CD8-positive, alpha-beta T cell (primary cell): ENCODE measurements at regions of chr10 and their contacts with region 1.

Region 1: GRCh38 chr10:30701451-30702173 is 72.1 kb upstream of the LYZL2 start:
- DNase-seq: peak; percentile 41 to 92 (median 74)
- ATAC-seq: peak; percentile 70
- H3K4me3 ChIP-seq: peak overlapping the region; percentile 1 to 43
- H3K4me3 Mint-ChIP-seq: peak overlapping the region; percentile 78
- H3K27ac ChIP-seq: peak overlapping the region; percentile 48 to 81
- H3K27ac Mint-ChIP-seq: peak overlapping the region; percentile 95
- H3K4me1 ChIP-seq: peaks cover 74% of the 10 kb centered on the region
- H3K4me1 Mint-ChIP-seq: peaks cover 83% of the 10 kb centered on the region
- H3K27me3 ChIP-seq: no peaks in the 10 kb centered on the region
- H3K27me3 Mint-ChIP-seq: no peaks in the 10 kb centered on the region
- CTCF ChIP-seq: no peak

Region 2: DNA sequence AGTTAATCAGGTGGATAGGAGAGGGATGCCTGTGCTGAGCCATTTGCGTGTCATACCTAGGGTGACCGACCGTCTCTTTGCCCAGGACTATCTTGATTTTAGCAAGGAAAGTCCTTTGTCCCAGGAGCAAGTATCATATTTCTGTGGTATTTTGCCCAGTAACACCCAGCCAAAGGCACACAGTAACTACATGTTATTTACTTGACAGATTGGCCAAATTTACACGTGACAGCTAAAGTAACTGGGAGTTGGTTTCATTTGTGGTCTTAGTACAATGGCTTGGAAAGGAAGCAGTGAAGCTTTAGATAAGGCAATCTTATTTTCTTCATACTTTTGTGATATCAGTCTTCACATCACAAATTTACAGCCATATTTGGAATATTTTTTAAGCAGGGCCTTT is 784.3 kb before region 1 on chr10:
- CTCF ChIA-PET with region 1: no interaction called
- POLR2A ChIA-PET with region 1: no interaction called
- intact Hi-C with region 1: no loop called
- DNase-seq: no peak
- ATAC-seq: no peak
- H3K4me3 ChIP-seq: no peak overlapping the region
- H3K4me3 Mint-ChIP-seq: no peak overlapping the region
- H3K27ac ChIP-seq: no peak overlapping the region
- H3K27ac Mint-ChIP-seq: no peak overlapping the region
- H3K4me1 ChIP-seq: no peaks in the 10 kb centered on the region
- H3K4me1 Mint-ChIP-seq: no peaks in the 10 kb centered on the region
- H3K27me3 ChIP-seq: peaks cover 0 to 6% of the 10 kb centered on the region in 2 experiments
- H3K27me3 Mint-ChIP-seq: peaks cover 17% of the 10 kb centered on the region
- CTCF ChIP-seq: no peak

Region 3: DNA sequence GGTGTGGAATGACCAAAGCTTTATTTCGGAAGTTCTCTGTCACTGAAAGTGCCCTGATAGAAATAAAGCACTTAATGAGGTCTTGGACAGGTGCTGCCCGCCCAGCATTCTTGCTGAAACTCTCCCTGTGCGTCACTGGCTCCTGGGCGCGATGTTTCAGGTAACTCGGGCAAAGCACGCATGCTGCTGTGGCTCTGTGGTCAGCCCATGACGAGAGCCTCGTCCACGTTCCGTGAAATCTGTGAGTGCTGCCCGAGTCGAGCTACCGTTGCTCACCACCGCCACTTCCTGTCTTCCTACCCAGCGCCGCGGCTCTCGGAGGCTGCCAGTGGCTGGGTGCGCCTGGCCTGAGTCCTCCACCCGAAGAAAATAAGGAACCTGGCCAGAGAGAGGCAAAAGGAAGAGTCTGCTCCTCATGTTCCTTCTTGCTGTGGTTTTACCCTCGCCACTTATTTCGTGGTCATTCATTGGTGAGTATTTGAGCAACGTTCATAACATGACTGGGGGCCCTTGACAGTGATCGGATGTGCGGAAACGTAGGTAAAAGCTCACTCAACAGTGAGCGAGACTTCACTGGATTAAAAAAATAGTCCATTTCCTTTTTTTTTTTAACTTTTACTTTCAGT is 172.1 kb before region 1 on chr10:
- CTCF ChIA-PET with region 1: no interaction called
- POLR2A ChIA-PET with region 1: interaction called, 4 read pairs
- intact Hi-C with region 1: loop called (anchors 5 to 10 kb)
- DNase-seq: peak; percentile 64 to 94 (median 77)
- ATAC-seq: peak; percentile 79
- H3K4me3 ChIP-seq: peak overlapping the region; percentile 47 to 63
- H3K4me3 Mint-ChIP-seq: peak overlapping the region; percentile 86
- H3K27ac ChIP-seq: peak overlapping the region; percentile 89 to 94
- H3K27ac Mint-ChIP-seq: peak overlapping the region; percentile 99
- H3K4me1 ChIP-seq: peaks cover 47% of the 10 kb centered on the region
- H3K4me1 Mint-ChIP-seq: peaks cover 66% of the 10 kb centered on the region
- H3K27me3 ChIP-seq: no peaks in the 10 kb centered on the region
- H3K27me3 Mint-ChIP-seq: no peaks in the 10 kb centered on the region
- CTCF ChIP-seq: no peak

Region 4: GRCh38 chr10:30751678-30752331 is 50.2 kb after region 1 on chr10:
- CTCF ChIA-PET with region 1: no interaction called
- POLR2A ChIA-PET with region 1: no interaction called
- intact Hi-C with region 1: no loop called
- DNase-seq: peak in 5 of 9 experiments; percentile 40 to 65 (median 58)
- ATAC-seq: no peak
- H3K4me3 ChIP-seq: no peak overlapping the region
- H3K4me3 Mint-ChIP-seq: no peak overlapping the region
- H3K27ac ChIP-seq: no peak overlapping the region
- H3K27ac Mint-ChIP-seq: no peak overlapping the region
- H3K4me1 ChIP-seq: peaks cover 3% of the 10 kb centered on the region
- H3K4me1 Mint-ChIP-seq: peaks cover 29% of the 10 kb centered on the region
- H3K27me3 ChIP-seq: no peaks in the 10 kb centered on the region
- H3K27me3 Mint-ChIP-seq: peaks cover 3% of the 10 kb centered on the region
- CTCF ChIP-seq: no peak

Region 5: DNA sequence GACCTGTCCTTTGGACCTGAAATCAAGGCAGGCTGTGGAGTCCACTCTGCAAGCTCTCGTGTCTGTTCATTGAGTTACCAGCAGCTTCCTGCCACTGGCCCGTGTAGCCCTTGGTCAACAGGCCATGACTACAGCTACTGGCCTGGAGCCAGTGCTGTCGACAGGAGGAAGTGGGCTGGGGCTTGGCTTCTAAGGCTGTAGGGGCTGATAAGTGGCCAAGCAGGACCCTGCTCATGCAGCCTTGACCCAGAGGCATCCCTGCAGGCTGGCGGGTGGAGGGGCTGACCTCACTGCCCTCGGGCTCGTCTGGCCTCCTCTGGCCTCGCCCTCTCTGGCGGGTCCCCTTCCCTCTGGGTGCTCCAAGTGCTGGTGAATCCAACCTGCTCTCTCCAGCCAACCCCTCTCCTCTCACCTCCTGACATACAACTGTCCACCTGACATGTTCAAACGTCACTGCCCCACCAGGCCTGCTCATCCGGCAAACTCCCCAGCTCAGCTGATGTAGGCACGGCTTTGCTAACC is 116.5 kb after region 1 on chr10:
- CTCF ChIA-PET with region 1: no interaction called
- POLR2A ChIA-PET with region 1: no interaction called
- intact Hi-C with region 1: no loop called
- DNase-seq: no peak
- ATAC-seq: no peak
- H3K4me3 ChIP-seq: no peak overlapping the region
- H3K4me3 Mint-ChIP-seq: no peak overlapping the region
- H3K27ac ChIP-seq: no peak overlapping the region
- H3K27ac Mint-ChIP-seq: no peak overlapping the region
- H3K4me1 ChIP-seq: no peaks in the 10 kb centered on the region
- H3K4me1 Mint-ChIP-seq: peaks cover 12% of the 10 kb centered on the region
- H3K27me3 ChIP-seq: no peaks in the 10 kb centered on the region
- H3K27me3 Mint-ChIP-seq: no peaks in the 10 kb centered on the region
- CTCF ChIP-seq: no peak

Region 6: DNA sequence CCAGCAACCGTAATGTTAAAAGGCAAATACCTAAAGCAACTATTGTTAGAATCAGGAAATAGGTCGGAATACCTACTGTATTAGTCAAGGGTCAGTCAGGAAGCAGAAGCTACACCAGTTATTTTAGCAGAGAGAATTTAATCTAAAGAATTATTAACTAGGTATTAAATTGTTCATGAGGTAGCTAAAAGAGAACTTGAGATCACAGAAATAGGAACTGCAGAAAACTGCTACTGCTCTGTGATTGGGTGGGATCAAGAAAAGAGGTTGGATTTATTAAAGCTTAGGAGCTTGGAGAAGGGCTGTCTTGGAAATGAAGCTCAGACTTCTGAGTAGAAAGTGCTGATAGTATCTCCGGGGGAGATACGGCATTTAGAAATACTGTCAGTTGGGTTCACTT is 350.1 kb after region 1 on chr10:
- CTCF ChIA-PET with region 1: no interaction called
- POLR2A ChIA-PET with region 1: no interaction called
- intact Hi-C with region 1: no loop called
- DNase-seq: no peak
- ATAC-seq: no peak
- H3K4me3 ChIP-seq: no peak overlapping the region
- H3K4me3 Mint-ChIP-seq: no peak overlapping the region
- H3K27ac ChIP-seq: no peak overlapping the region
- H3K27ac Mint-ChIP-seq: no peak overlapping the region
- H3K4me1 ChIP-seq: no peaks in the 10 kb centered on the region
- H3K4me1 Mint-ChIP-seq: no peaks in the 10 kb centered on the region
- H3K27me3 ChIP-seq: peaks cover 0 to 3% of the 10 kb centered on the region in 2 experiments
- H3K27me3 Mint-ChIP-seq: peaks cover 1% of the 10 kb centered on the region
- CTCF ChIP-seq: no peak

Region 7: GRCh38 chr10:31318854-31319601 is 617.4 kb after region 1 on chr10 and contains the start of gene ZEB1:
- CTCF ChIA-PET with region 1: no interaction called
- POLR2A ChIA-PET with region 1: no interaction called
- intact Hi-C with region 1: loop called (anchors 5 to 10 kb)
- DNase-seq: peak; percentile 83 to 97 (median 90)
- ATAC-seq: peak; percentile 42
- H3K4me3 ChIP-seq: peak within 1 kb of the TSS; percentile 92 to 95
- H3K4me3 Mint-ChIP-seq: peak within 1 kb of the TSS; percentile 100
- H3K27ac ChIP-seq: peak within 1 kb of the TSS; percentile 90 to 95
- H3K27ac Mint-ChIP-seq: peak within 1 kb of the TSS; percentile 100
- H3K4me1 ChIP-seq: peaks cover 28% of the 10 kb centered on the region
- H3K4me1 Mint-ChIP-seq: peaks cover 39% of the 10 kb centered on the region
- H3K27me3 ChIP-seq: no peaks in the 10 kb centered on the region
- H3K27me3 Mint-ChIP-seq: no peaks in the 10 kb centered on the region
- CTCF ChIP-seq: no peak
- total RNA-seq, gene ZEB1: 145 to 153 TPM

Region 8: GRCh38 chr10:32378363-32379317 is 1677.0 kb after region 1 on chr10:
- CTCF ChIA-PET with region 1: no interaction called
- POLR2A ChIA-PET with region 1: no interaction called
- intact Hi-C with region 1: loop called in 1 of 2 experiments (anchors 10 kb)
- DNase-seq: peak; percentile 86 to 96 (median 93)
- ATAC-seq: peak; percentile 88
- H3K4me3 ChIP-seq: peak overlapping the region; percentile 72 to 84
- H3K4me3 Mint-ChIP-seq: no peak overlapping the region
- H3K27ac ChIP-seq: peak overlapping the region; percentile 68 to 72
- H3K27ac Mint-ChIP-seq: no peak overlapping the region
- H3K4me1 ChIP-seq: peaks cover 19% of the 10 kb centered on the region
- H3K4me1 Mint-ChIP-seq: peaks cover 26% of the 10 kb centered on the region
- H3K27me3 ChIP-seq: no peaks in the 10 kb centered on the region
- H3K27me3 Mint-ChIP-seq: no peaks in the 10 kb centered on the region
- CTCF ChIP-seq: no peak